Activated naive CD4-positive, alpha-beta T cell treated with anti-CD3 and anti-CD28 coated beads for 36 hours (primary cell): ENCODE measurements at regions of chr1 and their contacts with region 1.

Region 1: GRCh38 chr1:89632657-89633247 is at the start of gene LRRC8C:
- DNase-seq: peak; percentile 86
- H3K4me3 Mint-ChIP-seq: peak within 1 kb of the TSS; percentile 91
- H3K27ac Mint-ChIP-seq: peak within 1 kb of the TSS; percentile 93
- H3K4me1 Mint-ChIP-seq: peaks cover 65% of the 10 kb centered on the region
- H3K27me3 Mint-ChIP-seq: no peaks in the 10 kb centered on the region
- total RNA-seq, gene LRRC8C: 13.6 TPM

Region 2: DNA sequence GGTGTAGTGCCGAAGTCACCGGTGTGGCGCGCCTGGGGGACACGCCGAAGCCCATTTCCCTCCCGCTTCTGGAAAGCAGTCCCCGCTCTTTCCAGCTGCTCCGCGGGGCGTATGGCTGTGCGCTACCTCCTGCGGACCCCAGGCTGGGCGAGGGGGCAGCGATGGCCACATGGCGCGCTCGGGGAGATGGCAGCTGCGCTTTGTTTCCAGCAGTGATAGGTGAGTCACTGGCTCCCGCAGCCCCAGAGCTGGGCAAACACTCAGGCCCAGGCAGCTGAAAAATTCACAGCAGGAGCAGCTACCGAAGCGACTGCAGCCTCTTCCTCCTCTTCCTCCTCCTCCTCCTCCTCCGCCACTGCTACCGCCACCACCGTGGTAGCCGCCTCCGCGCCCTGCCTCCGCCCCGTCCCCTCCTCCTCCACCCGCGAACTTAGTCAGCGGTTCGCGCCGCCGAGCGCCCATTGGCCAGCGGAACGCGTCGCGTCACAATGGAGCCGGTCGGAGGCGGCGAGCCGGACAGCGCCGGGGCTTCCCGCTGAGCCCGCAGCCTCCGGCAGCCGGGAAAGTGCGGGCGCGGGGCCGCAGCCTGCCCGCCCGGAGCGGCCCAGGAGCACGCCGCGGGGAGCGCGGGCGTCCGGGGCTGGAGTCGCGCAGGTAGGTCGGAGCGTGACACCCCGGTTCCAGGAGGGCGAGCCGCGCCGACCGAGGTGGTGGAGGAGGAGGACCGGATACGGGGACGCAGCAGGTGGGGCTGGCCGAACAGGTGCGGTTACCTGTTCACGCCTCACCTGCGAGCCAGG is 108.2 kb before region 1 on chr1 and contains the start of gene LRRC8B:
- CTCF ChIA-PET with region 1: interaction called, 6 read pairs
- intact Hi-C with region 1: loop called (anchors 1 kb)
- DNase-seq: peak; percentile 93
- H3K4me3 Mint-ChIP-seq: no peak within 1 kb of the TSS
- H3K27ac Mint-ChIP-seq: no peak within 1 kb of the TSS
- H3K4me1 Mint-ChIP-seq: peaks cover 34% of the 10 kb centered on the region
- H3K27me3 Mint-ChIP-seq: no peaks in the 10 kb centered on the region
- total RNA-seq, gene LRRC8B: 18.0 to 20.4 TPM

Region 3: GRCh38 chr1:89535537-89535936 is 97.2 kb before region 1 on chr1:
- CTCF ChIA-PET with region 1: no interaction called
- intact Hi-C with region 1: no loop called
- DNase-seq: no peak
- H3K4me3 Mint-ChIP-seq: no peak overlapping the region
- H3K27ac Mint-ChIP-seq: no peak overlapping the region
- H3K4me1 Mint-ChIP-seq: peaks cover 90% of the 10 kb centered on the region
- H3K27me3 Mint-ChIP-seq: no peaks in the 10 kb centered on the region

Region 4: GRCh38 chr1:89615676-89616598 is 16.8 kb before region 1 on chr1:
- CTCF ChIA-PET with region 1: interaction called, 21 read pairs
- intact Hi-C with region 1: loop called (anchors 1 kb)
- DNase-seq: no peak
- H3K4me3 Mint-ChIP-seq: no peak overlapping the region
- H3K27ac Mint-ChIP-seq: no peak overlapping the region
- H3K4me1 Mint-ChIP-seq: peaks cover 65% of the 10 kb centered on the region
- H3K27me3 Mint-ChIP-seq: no peaks in the 10 kb centered on the region

Region 5: DNA sequence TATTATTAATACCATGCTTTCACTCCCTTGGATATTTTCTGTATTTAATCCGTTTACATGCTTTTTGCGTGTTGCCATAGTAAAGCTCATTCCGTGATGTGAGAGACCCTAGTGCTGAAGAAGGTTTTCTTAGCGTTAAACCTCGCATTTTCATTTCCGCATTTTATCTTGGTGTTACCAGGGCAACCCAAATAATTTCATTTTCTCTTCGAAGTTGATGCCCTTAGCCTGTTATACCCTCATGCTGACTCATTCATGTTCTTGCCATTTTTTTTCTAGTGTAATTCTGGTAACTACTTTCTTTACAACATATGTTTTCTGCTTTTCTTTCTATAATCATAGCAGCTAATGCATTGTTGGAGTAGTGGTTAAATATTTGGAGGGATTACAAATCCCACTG is 37.4 kb after region 1 on chr1:
- CTCF ChIA-PET with region 1: interaction called, 3 read pairs
- intact Hi-C with region 1: loop called (anchors 1 kb)
- DNase-seq: no peak
- H3K4me3 Mint-ChIP-seq: peak overlapping the region; percentile 16
- H3K27ac Mint-ChIP-seq: peak overlapping the region; percentile 43
- H3K4me1 Mint-ChIP-seq: peaks cover 83% of the 10 kb centered on the region
- H3K27me3 Mint-ChIP-seq: no peaks in the 10 kb centered on the region

Region 6: GRCh38 chr1:89719502-89720306 is 87.0 kb after region 1 on chr1:
- CTCF ChIA-PET with region 1: interaction called, 14 read pairs
- intact Hi-C with region 1: loop called (anchors 1 kb)
- DNase-seq: peak; percentile 28
- H3K4me3 Mint-ChIP-seq: peak overlapping the region; percentile 26
- H3K27ac Mint-ChIP-seq: peak overlapping the region; percentile 95
- H3K4me1 Mint-ChIP-seq: peaks cover 86% of the 10 kb centered on the region
- H3K27me3 Mint-ChIP-seq: no peaks in the 10 kb centered on the region

Region 7: DNA sequence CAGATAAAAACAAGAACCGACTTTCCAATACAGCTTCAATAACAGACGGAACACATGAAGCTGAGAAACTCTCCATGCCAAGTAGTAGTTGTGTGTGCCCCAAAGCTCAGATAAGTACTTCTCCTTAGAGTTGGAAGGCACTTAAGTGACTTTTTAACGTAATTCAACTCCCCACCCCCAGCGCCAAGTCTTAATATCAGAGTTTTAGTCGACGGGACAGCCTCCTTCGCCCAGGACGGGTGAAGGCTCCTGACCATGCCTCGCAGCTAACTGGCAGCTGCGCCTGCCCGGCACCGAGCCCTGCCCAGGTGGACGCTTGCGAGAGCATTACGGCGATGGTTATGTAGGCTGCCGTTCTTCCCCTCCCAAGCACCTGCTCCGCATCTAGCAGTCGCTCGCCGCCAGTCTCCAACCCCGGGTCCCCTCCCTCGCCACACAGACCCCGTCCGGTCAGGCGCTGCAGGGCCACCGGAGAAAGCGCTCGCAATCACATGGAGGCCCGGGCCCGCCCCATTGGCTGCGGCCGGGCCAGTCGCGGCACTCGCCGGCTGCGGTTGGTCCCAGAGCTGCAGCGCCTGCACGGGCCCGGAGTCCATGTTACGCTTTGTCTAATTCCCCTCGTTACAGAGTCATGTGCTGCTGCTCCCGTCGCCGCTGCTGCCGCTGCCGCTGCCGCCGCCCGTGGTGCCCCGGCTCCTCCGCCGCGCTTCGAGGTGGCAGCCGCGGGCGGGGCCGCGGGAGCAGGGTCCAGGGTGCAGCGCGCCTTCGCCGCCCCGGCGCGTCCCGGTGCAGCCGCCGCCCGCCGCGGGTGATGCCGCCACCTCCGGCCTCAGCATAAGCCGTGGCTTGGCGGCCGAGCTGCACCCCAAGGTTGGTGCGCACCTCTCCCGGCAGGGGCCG is 187.9 kb after region 1 on chr1 and contains the start of gene LRRC8D:
- CTCF ChIA-PET with region 1: no interaction called
- intact Hi-C with region 1: loop called (anchors 2 kb)
- DNase-seq: peak; percentile 81
- H3K4me3 Mint-ChIP-seq: peak within 1 kb of the TSS; percentile 85
- H3K27ac Mint-ChIP-seq: peak within 1 kb of the TSS; percentile 26
- H3K4me1 Mint-ChIP-seq: peaks cover 34% of the 10 kb centered on the region
- H3K27me3 Mint-ChIP-seq: no peaks in the 10 kb centered on the region
- total RNA-seq, gene LRRC8D: 14.4 to 15.0 TPM

Region 8: GRCh38 chr1:89994805-89995597 is 362.2 kb after region 1 on chr1 and contains the start of gene ZNF326:
- CTCF ChIA-PET with region 1: interaction called, 4 read pairs
- intact Hi-C with region 1: loop called (anchors 2 kb)
- DNase-seq: peak; percentile 94
- H3K4me3 Mint-ChIP-seq: peak within 1 kb of the TSS; percentile 96
- H3K27ac Mint-ChIP-seq: peak within 1 kb of the TSS; percentile 90
- H3K4me1 Mint-ChIP-seq: peaks cover 42% of the 10 kb centered on the region
- H3K27me3 Mint-ChIP-seq: no peaks in the 10 kb centered on the region
- total RNA-seq, gene ZNF326: 17.4 to 17.9 TPM